ENCODE measurements at regions of chr14 and their contacts with region 1.

Region 1: GRCh38 chr14:77565289-77565993 is 51.0 kb downstream of the SPTLC2 start:
- DNase-seq: peak; percentile 71 to 85 (median 85)
- H3K4me3 ChIP-seq: peak overlapping the region; percentile 13 to 64 (median 58)
- H3K4me3 Mint-ChIP-seq: peak overlapping the region; percentile 48 to 78
- H3K27ac ChIP-seq: peak overlapping the region; percentile 82 to 96
- H3K27ac Mint-ChIP-seq: peak overlapping the region; percentile 94 to 98 (median 97)
- H3K4me1 ChIP-seq: peaks cover 40 to 41% of the 10 kb centered on the region in 2 donors
- H3K4me1 Mint-ChIP-seq: peaks cover 44% of the 10 kb centered on the region
- H3K27me3 ChIP-seq: no peaks in the 10 kb centered on the region
- H3K27me3 Mint-ChIP-seq: peaks cover 0 to 2% (median 0%) of the 10 kb centered on the region in 3 donors
- CTCF ChIP-seq: no peak

Region 2: GRCh38 chr14:77470192-77470870 is 95.1 kb before region 1 on chr14:
- intact Hi-C with region 1: no loop called
- DNase-seq: no peak
- H3K4me3 ChIP-seq: no peak overlapping the region
- H3K4me3 Mint-ChIP-seq: no peak overlapping the region
- H3K27ac ChIP-seq: no peak overlapping the region
- H3K27ac Mint-ChIP-seq: peak overlapping the region in 1 of 7 donors; percentile 37
- H3K4me1 ChIP-seq: no peaks in the 10 kb centered on the region
- H3K4me1 Mint-ChIP-seq: no peaks in the 10 kb centered on the region
- H3K27me3 ChIP-seq: no peaks in the 10 kb centered on the region
- H3K27me3 Mint-ChIP-seq: peaks cover 0 to 3% (median 2%) of the 10 kb centered on the region in 3 donors
- CTCF ChIP-seq: no peak

Region 3: DNA sequence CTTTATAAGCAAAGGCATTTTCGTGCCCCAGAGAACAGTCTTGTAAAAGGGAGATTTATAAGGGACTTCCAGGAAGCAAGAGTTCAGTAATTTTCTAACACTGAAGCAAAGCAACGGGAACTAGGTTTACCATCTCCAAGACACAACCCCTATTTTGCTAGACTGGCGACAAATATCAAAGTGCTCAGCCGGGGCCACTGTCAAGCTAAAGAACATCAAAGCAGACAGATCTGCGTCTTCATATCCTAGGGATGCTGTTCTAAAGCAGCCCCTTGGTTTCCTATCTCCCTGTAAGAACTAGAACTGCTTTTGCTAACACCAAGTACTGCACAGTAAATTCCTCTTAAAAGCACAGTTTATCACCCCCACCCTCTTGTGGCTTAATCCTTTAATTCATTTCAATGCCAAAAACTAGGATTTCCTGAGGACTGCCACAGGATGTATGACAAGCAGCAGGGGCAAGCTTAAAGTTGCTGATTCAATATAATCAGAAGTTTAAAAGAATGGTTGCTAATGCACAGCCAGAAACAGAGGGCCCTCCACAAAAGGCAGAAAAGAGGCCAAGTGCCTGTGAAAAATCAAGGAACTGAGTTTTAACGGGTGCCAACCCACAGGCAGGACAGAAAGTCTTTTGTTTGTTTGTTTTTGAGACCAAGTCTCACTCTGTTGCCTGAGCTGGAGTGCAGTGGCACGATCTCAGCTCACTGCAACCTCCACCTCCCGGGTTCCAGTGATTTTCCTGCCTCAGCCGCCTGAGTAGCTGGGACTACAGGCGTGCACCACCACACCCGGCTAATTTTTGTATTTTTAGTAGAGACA is 22.8 kb before region 1 on chr14:
- intact Hi-C with region 1: no loop called
- DNase-seq: no peak
- H3K4me3 ChIP-seq: no peak overlapping the region
- H3K4me3 Mint-ChIP-seq: no peak overlapping the region
- H3K27ac ChIP-seq: peak overlapping the region; percentile 52 to 69
- H3K27ac Mint-ChIP-seq: peak overlapping the region; percentile 62 to 84 (median 75)
- H3K4me1 ChIP-seq: peaks cover 20 to 21% of the 10 kb centered on the region in 2 donors
- H3K4me1 Mint-ChIP-seq: peaks cover 46% of the 10 kb centered on the region
- H3K27me3 ChIP-seq: no peaks in the 10 kb centered on the region
- H3K27me3 Mint-ChIP-seq: no peaks in the 10 kb centered on the region
- CTCF ChIP-seq: no peak

Region 4: GRCh38 chr14:77616454-77617229 is 51.2 kb after region 1 on chr14 and contains the start of gene SPTLC2:
- intact Hi-C with region 1: loop called (anchors 10 kb)
- DNase-seq: peak; percentile 96 to 98 (median 96)
- H3K4me3 ChIP-seq: peak within 1 kb of the TSS; percentile 82 to 99 (median 83)
- H3K4me3 Mint-ChIP-seq: peak within 1 kb of the TSS; percentile 94 to 97
- H3K27ac ChIP-seq: peak within 1 kb of the TSS; percentile 84 to 87
- H3K27ac Mint-ChIP-seq: peak within 1 kb of the TSS; percentile 88 to 96 (median 94)
- H3K4me1 ChIP-seq: peaks cover 28 to 55% of the 10 kb centered on the region in 2 donors
- H3K4me1 Mint-ChIP-seq: peaks cover 61% of the 10 kb centered on the region
- H3K27me3 ChIP-seq: no peaks in the 10 kb centered on the region
- H3K27me3 Mint-ChIP-seq: peaks cover 0 to 3% (median 2%) of the 10 kb centered on the region in 3 donors
- CTCF ChIP-seq: no peak
- polyA plus RNA-seq, gene SPTLC2: 38.1 to 81.9 (median 73.1) TPM

Region 5: GRCh38 chr14:77659831-77660230 is 94.4 kb after region 1 on chr14:
- intact Hi-C with region 1: loop called in 1 of 2 experiments (anchors 5 kb)
- DNase-seq: peak; percentile 75 to 94 (median 89)
- H3K4me3 ChIP-seq: peak overlapping the region; percentile 0 to 52 (median 34)
- H3K4me3 Mint-ChIP-seq: peak overlapping the region; percentile 68 to 72
- H3K27ac ChIP-seq: peak overlapping the region; percentile 87 to 96
- H3K27ac Mint-ChIP-seq: peak overlapping the region; percentile 88 to 98 (median 97)
- H3K4me1 ChIP-seq: peaks cover 55 to 66% of the 10 kb centered on the region in 2 donors
- H3K4me1 Mint-ChIP-seq: peaks cover 64% of the 10 kb centered on the region
- H3K27me3 ChIP-seq: no peaks in the 10 kb centered on the region
- H3K27me3 Mint-ChIP-seq: no peaks in the 10 kb centered on the region
- CTCF ChIP-seq: no peak

Region 6: DNA sequence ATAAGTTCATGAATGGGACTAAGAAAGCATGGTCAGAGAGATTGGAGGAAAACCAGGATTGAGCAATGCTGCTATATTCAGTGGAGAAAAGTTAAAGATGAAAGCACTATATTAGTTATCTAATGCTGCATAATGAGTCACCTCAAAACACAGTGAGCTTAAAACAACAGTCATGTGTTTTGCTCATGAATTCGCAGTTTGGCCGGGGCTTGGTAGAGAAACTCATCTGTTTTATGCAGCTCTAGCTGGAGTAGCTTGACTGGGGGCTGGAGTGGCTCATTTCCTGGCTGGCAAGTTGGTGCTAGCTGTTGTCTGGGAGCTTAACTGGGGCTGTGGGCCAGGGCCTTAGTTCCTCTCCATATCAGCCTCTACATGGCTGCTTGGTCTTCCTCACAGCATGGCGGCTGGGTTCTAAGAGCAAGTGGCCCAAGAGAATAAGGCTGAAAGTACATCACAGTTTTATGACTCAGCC is 324.6 kb after region 1 on chr14:
- intact Hi-C with region 1: no loop called
- DNase-seq: no peak
- H3K4me3 ChIP-seq: no peak overlapping the region
- H3K4me3 Mint-ChIP-seq: no peak overlapping the region
- H3K27ac ChIP-seq: no peak overlapping the region
- H3K27ac Mint-ChIP-seq: no peak overlapping the region
- H3K4me1 ChIP-seq: no peaks in the 10 kb centered on the region
- H3K4me1 Mint-ChIP-seq: no peaks in the 10 kb centered on the region
- H3K27me3 ChIP-seq: no peaks in the 10 kb centered on the region
- H3K27me3 Mint-ChIP-seq: peaks cover 0 to 2% (median 0%) of the 10 kb centered on the region in 3 donors
- CTCF ChIP-seq: no peak